ENCODE measurements at regions of chr16 and their contacts with region 1.

Region 1: DNA sequence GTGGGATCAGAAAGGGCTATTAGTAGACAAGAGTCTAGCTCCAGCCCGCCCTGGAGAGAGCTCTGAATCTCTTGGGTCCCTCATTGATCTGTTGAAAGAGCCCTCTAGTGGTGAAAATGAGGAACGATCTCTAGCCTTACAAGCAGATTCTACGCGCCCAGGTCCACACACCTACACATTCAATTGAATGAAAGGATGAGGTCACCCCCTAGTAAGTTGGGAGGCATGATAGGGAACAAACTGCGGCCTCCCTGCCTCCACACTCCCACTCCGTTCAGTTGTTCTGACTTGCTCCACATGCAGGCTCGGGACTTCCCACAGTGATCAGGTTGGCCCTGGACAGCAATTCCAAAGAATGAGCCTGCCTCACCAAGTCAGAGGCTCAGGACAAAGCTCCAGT is 2.9 kb upstream of the CACNG3 start:
- DNase-seq: peak in 4 of 5 donors; percentile 8 to 51 (median 40)
- H3K4me3 ChIP-seq: no peak overlapping the region
- H3K4me3 Mint-ChIP-seq: no peak overlapping the region
- H3K27ac ChIP-seq: no peak overlapping the region
- H3K27ac Mint-ChIP-seq: no peak overlapping the region
- H3K4me1 ChIP-seq: no peaks in the 10 kb centered on the region
- H3K4me1 Mint-ChIP-seq: peaks cover 4 to 10% (median 5%) of the 10 kb centered on the region in 3 donors
- H3K27me3 ChIP-seq: peaks cover 19% of the 10 kb centered on the region
- H3K27me3 Mint-ChIP-seq: peaks cover 53 to 65% of the 10 kb centered on the region in 2 donors

Region 2: GRCh38 chr16:24041826-24042631 is 211.2 kb before region 1 on chr16:
- CTCF ChIA-PET with region 1: interaction called, 35 read pairs
- POLR2A ChIA-PET with region 1: no interaction called
- DNase-seq: peak; percentile 57 to 81 (median 68)
- H3K4me3 ChIP-seq: no peak overlapping the region
- H3K4me3 Mint-ChIP-seq: no peak overlapping the region
- H3K27ac ChIP-seq: no peak overlapping the region
- H3K27ac Mint-ChIP-seq: peak overlapping the region in 6 of 8 donors; percentile 2 to 63 (median 51)
- H3K4me1 ChIP-seq: no peaks in the 10 kb centered on the region
- H3K4me1 Mint-ChIP-seq: peaks cover 16 to 38% (median 34%) of the 10 kb centered on the region in 3 donors
- H3K27me3 ChIP-seq: no peaks in the 10 kb centered on the region
- H3K27me3 Mint-ChIP-seq: peaks cover 0 to 1% of the 10 kb centered on the region in 2 donors